Endothelial cell of umbilical vein (primary cell): ENCODE measurements at regions of chr17 and their contacts with region 1.

Region 1: DNA sequence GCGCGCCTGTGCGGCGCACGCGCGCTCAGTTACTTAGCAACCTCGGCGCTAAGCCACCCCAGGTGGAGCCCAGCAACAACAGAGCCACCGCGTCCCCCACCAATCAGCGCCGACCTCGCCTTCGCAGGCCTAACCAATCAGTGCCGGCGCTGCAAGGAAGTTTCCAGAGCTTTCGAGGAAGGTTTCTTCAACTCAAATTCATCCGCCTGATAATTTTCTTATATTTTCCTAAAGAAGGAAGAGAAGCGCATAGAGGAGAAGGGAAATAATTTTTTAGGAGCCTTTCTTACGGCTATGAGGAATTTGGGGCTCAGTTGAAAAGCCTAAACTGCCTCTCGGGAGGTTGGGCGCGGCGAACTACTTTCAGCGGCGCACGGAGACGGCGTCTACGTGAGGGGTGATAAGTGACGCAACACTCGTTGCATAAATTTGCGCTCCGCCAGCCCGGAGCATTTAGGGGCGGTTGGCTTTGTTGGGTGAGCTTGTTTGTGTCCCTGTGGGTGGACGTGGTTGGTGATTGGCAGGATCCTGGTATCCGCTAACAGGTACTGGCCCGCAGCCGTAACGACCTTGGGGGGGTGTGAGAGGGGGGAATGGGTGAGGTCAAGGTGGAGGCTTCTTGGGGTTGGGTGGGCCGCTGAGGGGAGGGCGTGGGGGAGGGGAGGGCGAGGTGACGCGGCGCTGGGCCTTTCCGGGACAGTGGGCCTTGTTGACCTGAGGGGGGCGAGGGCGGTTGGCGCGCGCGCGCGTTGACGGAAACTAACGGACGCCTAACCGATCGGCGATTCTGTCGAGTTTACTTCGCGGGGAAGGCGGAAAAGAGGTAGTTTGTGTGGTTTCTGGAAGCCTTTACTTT is at the start of gene UBB:
- DNase-seq: peak; percentile 98
- H3K4me3 ChIP-seq: peak within 1 kb of the TSS; percentile 65 to 90 (median 88)
- H3K27ac ChIP-seq: peak within 1 kb of the TSS; percentile 97
- H3K4me1 ChIP-seq: peaks cover 4% of the 10 kb centered on the region
- H3K27me3 ChIP-seq: no peaks in the 10 kb centered on the region
- CTCF ChIP-seq: peak in 1 of 2 donors; percentile 22
- POLR2A ChIP-seq: peak; percentile 100
- total RNA-seq, gene UBB: 1,183 and 1,294 TPM in 2 replicates

Region 2: GRCh38 chr17:16285957-16286640 is 94.8 kb before region 1 on chr17:
- CTCF ChIA-PET with region 1: no interaction called
- POLR2A ChIA-PET with region 1: interaction called, 17 read pairs
- dilution Hi-C with region 1: no loop called
- intact Hi-C with region 1: no loop called
- DNase-seq: peak; percentile 96
- H3K4me3 ChIP-seq: peak overlapping the region in 1 of 3 experiments; percentile 16
- H3K27ac ChIP-seq: peak overlapping the region; percentile 96
- H3K4me1 ChIP-seq: peaks cover 55% of the 10 kb centered on the region
- H3K27me3 ChIP-seq: no peaks in the 10 kb centered on the region
- CTCF ChIP-seq: peak; percentile 54 to 56
- POLR2A ChIP-seq: peak; percentile 83

Region 3: DNA sequence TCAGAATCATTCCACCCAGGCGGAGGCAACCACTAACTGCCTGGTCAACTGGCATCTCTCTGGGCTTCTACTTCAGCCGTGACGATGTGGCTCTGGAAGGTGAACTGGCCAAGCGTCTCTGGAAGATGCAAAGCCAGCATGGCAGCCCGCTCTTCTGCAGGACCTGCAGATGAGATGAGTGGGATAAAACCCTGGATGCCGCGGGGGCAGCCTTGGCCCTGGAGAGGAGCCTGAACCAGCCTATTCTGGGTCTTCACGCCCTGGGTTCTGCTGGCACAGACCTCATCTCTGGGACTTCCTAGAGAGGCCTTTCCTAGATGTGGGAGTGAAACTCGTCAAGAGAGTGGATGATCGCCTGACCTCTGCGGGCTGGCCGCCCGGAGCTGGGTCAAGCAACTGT is 10.6 kb after region 1 on chr17:
- CTCF ChIA-PET with region 1: no interaction called
- POLR2A ChIA-PET with region 1: interaction called, 12 read pairs
- dilution Hi-C with region 1: no loop called
- intact Hi-C with region 1: no loop called
- DNase-seq: no peak
- H3K4me3 ChIP-seq: no peak overlapping the region
- H3K27ac ChIP-seq: no peak overlapping the region
- H3K4me1 ChIP-seq: no peaks in the 10 kb centered on the region
- H3K27me3 ChIP-seq: peaks cover 0 to 2% of the 10 kb centered on the region in 2 experiments
- CTCF ChIP-seq: no peak
- POLR2A ChIP-seq: no peak

Region 4: GRCh38 chr17:16415031-16415924 is 34.4 kb after region 1 on chr17 and contains the start of gene TRPV2:
- CTCF ChIA-PET with region 1: interaction called, 3 read pairs
- POLR2A ChIA-PET with region 1: interaction called, 11 read pairs
- dilution Hi-C with region 1: no loop called
- intact Hi-C with region 1: no loop called
- DNase-seq: no peak
- H3K4me3 ChIP-seq: no peak within 1 kb of the TSS
- H3K27ac ChIP-seq: no peak within 1 kb of the TSS
- H3K4me1 ChIP-seq: peaks cover 23% of the 10 kb centered on the region
- H3K27me3 ChIP-seq: no peaks in the 10 kb centered on the region
- CTCF ChIP-seq: peak in 1 of 2 donors; percentile 13
- POLR2A ChIP-seq: no peak
- total RNA-seq, gene TRPV2: 6.7 and 10.6 TPM in 2 replicates

Region 5: GRCh38 chr17:16438557-16439302 is 57.9 kb after region 1 on chr17:
- CTCF ChIA-PET with region 1: interaction called, 9 read pairs
- POLR2A ChIA-PET with region 1: interaction called, 52 read pairs
- dilution Hi-C with region 1: no loop called
- intact Hi-C with region 1: loop called (anchors 1 kb)
- DNase-seq: peak; percentile 100
- H3K4me3 ChIP-seq: peak overlapping the region; percentile 77 to 97 (median 89)
- H3K27ac ChIP-seq: peak overlapping the region; percentile 67
- H3K4me1 ChIP-seq: peaks cover 35% of the 10 kb centered on the region
- H3K27me3 ChIP-seq: no peaks in the 10 kb centered on the region
- CTCF ChIP-seq: no peak
- POLR2A ChIP-seq: peak; percentile 99